CD8-positive, alpha-beta T cell (primary cell): ENCODE measurements at regions of chr5 and their contacts with region 1.

Region 1: DNA sequence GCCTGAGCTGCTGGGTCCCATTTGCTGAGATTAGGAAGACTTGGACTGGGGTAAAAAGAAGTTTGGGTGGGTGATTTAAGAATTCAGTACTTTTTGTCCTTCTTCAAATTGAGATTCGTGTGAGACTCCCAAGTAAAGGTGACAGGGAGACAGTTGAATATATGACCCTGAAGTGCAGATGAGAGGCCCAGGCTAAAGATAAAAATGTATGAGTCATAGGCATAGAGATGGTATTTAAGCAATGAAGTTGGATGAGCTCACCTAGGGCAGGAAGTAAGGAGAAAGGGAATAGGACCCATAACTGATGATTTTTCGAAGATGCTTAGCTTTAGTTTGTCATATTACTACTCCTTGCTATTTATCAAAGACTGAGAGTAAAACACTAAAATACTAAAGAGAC is 255.9 kb upstream of the ADRA1B start:
- DNase-seq: no peak
- ATAC-seq: no peak
- H3K4me3 ChIP-seq: no peak overlapping the region
- H3K4me3 Mint-ChIP-seq: no peak overlapping the region
- H3K27ac ChIP-seq: no peak overlapping the region
- H3K27ac Mint-ChIP-seq: no peak overlapping the region
- H3K4me1 ChIP-seq: no peaks in the 10 kb centered on the region
- H3K4me1 Mint-ChIP-seq: no peaks in the 10 kb centered on the region
- H3K27me3 ChIP-seq: no peaks in the 10 kb centered on the region
- H3K27me3 Mint-ChIP-seq: no peaks in the 10 kb centered on the region
- CTCF ChIP-seq: no peak

Region 2: GRCh38 chr5:159695741-159696294 is 35.4 kb after region 1 on chr5:
- CTCF ChIA-PET with region 1: no interaction called
- POLR2A ChIA-PET with region 1: no interaction called
- intact Hi-C with region 1: loop called in 1 of 2 experiments (anchors 1 kb)
- DNase-seq: no peak
- ATAC-seq: no peak
- H3K4me3 ChIP-seq: no peak overlapping the region
- H3K4me3 Mint-ChIP-seq: no peak overlapping the region
- H3K27ac ChIP-seq: no peak overlapping the region
- H3K27ac Mint-ChIP-seq: no peak overlapping the region
- H3K4me1 ChIP-seq: no peaks in the 10 kb centered on the region
- H3K4me1 Mint-ChIP-seq: no peaks in the 10 kb centered on the region
- H3K27me3 ChIP-seq: no peaks in the 10 kb centered on the region
- H3K27me3 Mint-ChIP-seq: peaks cover 4% of the 10 kb centered on the region
- CTCF ChIP-seq: no peak